T-cell (primary cell): ENCODE measurements at regions of chr6 and their contacts with region 1.

Region 1: GRCh38 chr6:32868257-32868788 is 14.3 kb downstream of the PSMB9 start:
- DNase-seq: peak; percentile 64 to 95 (median 83)
- ATAC-seq: peak; percentile 73 to 81 (median 76)
- H3K4me3 ChIP-seq: no peak overlapping the region
- H3K4me3 Mint-ChIP-seq: no peak overlapping the region
- H3K27ac ChIP-seq: no peak overlapping the region
- H3K27ac Mint-ChIP-seq: peak overlapping the region in 1 of 2 donors; percentile 4
- H3K4me1 ChIP-seq: peaks cover 13 to 16% of the 10 kb centered on the region in 2 experiments
- H3K4me1 Mint-ChIP-seq: peaks cover 25 to 35% (median 34%) of the 10 kb centered on the region in 3 donors
- H3K27me3 ChIP-seq: no peaks in the 10 kb centered on the region
- H3K27me3 Mint-ChIP-seq: no peaks in the 10 kb centered on the region

Region 2: GRCh38 chr6:32413427-32414047 is 454.8 kb before region 1 on chr6:
- CTCF ChIA-PET with region 1: interaction called in 1 of 2 experiments, 18 read pairs
- POLR2A ChIA-PET with region 1: no interaction called
- DNase-seq: peak; percentile 57 to 92 (median 79)
- ATAC-seq: peak; percentile 86 to 90 (median 88)
- H3K4me3 ChIP-seq: no peak overlapping the region
- H3K4me3 Mint-ChIP-seq: no peak overlapping the region
- H3K27ac ChIP-seq: no peak overlapping the region
- H3K27ac Mint-ChIP-seq: peak overlapping the region in 1 of 2 donors; percentile 50
- H3K4me1 ChIP-seq: peaks cover 0 to 9% of the 10 kb centered on the region in 2 experiments
- H3K4me1 Mint-ChIP-seq: peaks cover 11 to 16% (median 11%) of the 10 kb centered on the region in 3 donors
- H3K27me3 ChIP-seq: peaks cover 5 to 26% of the 10 kb centered on the region in 2 experiments
- H3K27me3 Mint-ChIP-seq: peaks cover 43 to 47% of the 10 kb centered on the region in 2 donors

Region 3: GRCh38 chr6:32825966-32826365 is 42.4 kb before region 1 on chr6:
- CTCF ChIA-PET with region 1: interaction called, 3 to 16 read pairs
- POLR2A ChIA-PET with region 1: no interaction called
- DNase-seq: peak in 1 of 35 experiments; percentile 33
- ATAC-seq: no peak
- H3K4me3 ChIP-seq: no peak overlapping the region
- H3K4me3 Mint-ChIP-seq: no peak overlapping the region
- H3K27ac ChIP-seq: no peak overlapping the region
- H3K27ac Mint-ChIP-seq: no peak overlapping the region
- H3K4me1 ChIP-seq: no peaks in the 10 kb centered on the region
- H3K4me1 Mint-ChIP-seq: peaks cover 4 to 8% (median 6%) of the 10 kb centered on the region in 3 donors
- H3K27me3 ChIP-seq: no peaks in the 10 kb centered on the region
- H3K27me3 Mint-ChIP-seq: no peaks in the 10 kb centered on the region

Region 4: GRCh38 chr6:32843979-32844838 is 24.1 kb before region 1 on chr6 and contains the start of gene PSMB8:
- CTCF ChIA-PET with region 1: interaction called, 29 to 207 read pairs
- POLR2A ChIA-PET with region 1: interaction called, 3 read pairs
- DNase-seq: peak; percentile 96 to 100 (median 98)
- ATAC-seq: peak; percentile 79 to 82 (median 81)
- H3K4me3 ChIP-seq: peak within 1 kb of the TSS; percentile 97 to 98
- H3K4me3 Mint-ChIP-seq: peak within 1 kb of the TSS; percentile 98 to 100 (median 100)
- H3K27ac ChIP-seq: peak within 1 kb of the TSS; percentile 100
- H3K27ac Mint-ChIP-seq: peak within 1 kb of the TSS; percentile 100
- H3K4me1 ChIP-seq: peaks cover 52 to 72% of the 10 kb centered on the region in 2 experiments
- H3K4me1 Mint-ChIP-seq: peaks cover 79 to 90% (median 84%) of the 10 kb centered on the region in 3 donors
- H3K27me3 ChIP-seq: no peaks in the 10 kb centered on the region
- H3K27me3 Mint-ChIP-seq: no peaks in the 10 kb centered on the region
- total RNA-seq, gene PSMB8: 131 to 171 (median 150) TPM

Region 5: GRCh38 chr6:32853541-32854375 is 14.6 kb before region 1 on chr6 and contains the starts of genes PSMB9 and TAP1:
- CTCF ChIA-PET with region 1: interaction called, 9 to 72 read pairs
- POLR2A ChIA-PET with region 1: interaction called, 3 to 5 read pairs
- DNase-seq: peak; percentile 86 to 98 (median 95)
- ATAC-seq: peak; percentile 82 to 87 (median 85)
- H3K4me3 ChIP-seq: peak within 1 kb of the TSS; percentile 85 to 95
- H3K4me3 Mint-ChIP-seq: peak within 1 kb of the TSS; percentile 98 to 99 (median 98)
- H3K27ac ChIP-seq: peak within 1 kb of the TSS; percentile 99
- H3K27ac Mint-ChIP-seq: peak within 1 kb of the TSS; percentile 99 to 100
- H3K4me1 ChIP-seq: peaks cover 34 to 68% of the 10 kb centered on the region in 2 experiments
- H3K4me1 Mint-ChIP-seq: peaks cover 70 to 88% (median 73%) of the 10 kb centered on the region in 3 donors
- H3K27me3 ChIP-seq: no peaks in the 10 kb centered on the region
- H3K27me3 Mint-ChIP-seq: no peaks in the 10 kb centered on the region
- total RNA-seq, gene PSMB9: 110 to 173 (median 134) TPM
- total RNA-seq, gene TAP1: 117 to 163 (median 147) TPM

Region 6: GRCh38 chr6:32984605-32985389 is 116.5 kb after region 1 on chr6:
- CTCF ChIA-PET with region 1: interaction called, 3 to 14 read pairs
- POLR2A ChIA-PET with region 1: no interaction called
- DNase-seq: peak; percentile 70 to 95 (median 88)
- ATAC-seq: peak; percentile 76 to 88 (median 86)
- H3K4me3 ChIP-seq: no peak overlapping the region
- H3K4me3 Mint-ChIP-seq: no peak overlapping the region
- H3K27ac ChIP-seq: no peak overlapping the region
- H3K27ac Mint-ChIP-seq: peak overlapping the region; percentile 50 to 83
- H3K4me1 ChIP-seq: peaks cover 0 to 9% of the 10 kb centered on the region in 2 experiments
- H3K4me1 Mint-ChIP-seq: peaks cover 23 to 35% (median 26%) of the 10 kb centered on the region in 3 donors
- H3K27me3 ChIP-seq: no peaks in the 10 kb centered on the region
- H3K27me3 Mint-ChIP-seq: no peaks in the 10 kb centered on the region